PC-9 (cell line): ENCODE measurements at regions of chr10 and their contacts with region 1.

Region 1: DNA sequence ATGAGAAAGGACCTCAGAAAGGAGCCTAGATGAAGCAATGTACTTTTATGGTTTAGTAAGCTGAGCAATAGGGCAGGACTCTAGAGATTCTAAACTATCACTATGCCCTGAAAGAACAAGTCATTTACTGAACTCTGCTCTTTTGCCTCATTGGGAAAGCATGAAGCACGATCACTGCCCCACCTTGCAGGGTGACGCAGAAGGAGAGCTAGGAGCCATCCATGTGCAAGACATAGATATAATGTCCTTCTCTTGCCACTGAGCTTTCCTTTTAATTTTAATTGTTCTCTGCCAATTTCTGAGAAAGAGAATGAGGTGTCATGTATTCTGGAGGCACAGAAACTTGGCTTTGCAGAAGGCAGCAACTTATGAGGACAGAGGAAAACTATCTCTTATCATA is 108.3 kb downstream of the SORCS1 start:
- DNase-seq: no peak
- H3K4me3 ChIP-seq: no peak overlapping the region
- H3K27ac ChIP-seq: no peak overlapping the region
- H3K4me1 ChIP-seq: no peaks in the 10 kb centered on the region
- H3K27me3 ChIP-seq: no peaks in the 10 kb centered on the region
- CTCF ChIP-seq: no peak

Region 2: GRCh38 chr10:106967452-106967851 is 88.7 kb before region 1 on chr10:
- CTCF ChIA-PET with region 1: no interaction called
- POLR2A ChIA-PET with region 1: no interaction called
- intact Hi-C with region 1: no loop called
- DNase-seq: no peak
- H3K4me3 ChIP-seq: no peak overlapping the region
- H3K27ac ChIP-seq: no peak overlapping the region
- H3K4me1 ChIP-seq: no peaks in the 10 kb centered on the region
- H3K27me3 ChIP-seq: no peaks in the 10 kb centered on the region
- CTCF ChIP-seq: no peak

Region 3: GRCh38 chr10:107031931-107032699 is 24.1 kb before region 1 on chr10:
- CTCF ChIA-PET with region 1: no interaction called
- POLR2A ChIA-PET with region 1: no interaction called
- intact Hi-C with region 1: no loop called
- DNase-seq: no peak
- H3K4me3 ChIP-seq: no peak overlapping the region
- H3K27ac ChIP-seq: no peak overlapping the region
- H3K4me1 ChIP-seq: no peaks in the 10 kb centered on the region
- H3K27me3 ChIP-seq: no peaks in the 10 kb centered on the region
- CTCF ChIP-seq: no peak

Region 4: DNA sequence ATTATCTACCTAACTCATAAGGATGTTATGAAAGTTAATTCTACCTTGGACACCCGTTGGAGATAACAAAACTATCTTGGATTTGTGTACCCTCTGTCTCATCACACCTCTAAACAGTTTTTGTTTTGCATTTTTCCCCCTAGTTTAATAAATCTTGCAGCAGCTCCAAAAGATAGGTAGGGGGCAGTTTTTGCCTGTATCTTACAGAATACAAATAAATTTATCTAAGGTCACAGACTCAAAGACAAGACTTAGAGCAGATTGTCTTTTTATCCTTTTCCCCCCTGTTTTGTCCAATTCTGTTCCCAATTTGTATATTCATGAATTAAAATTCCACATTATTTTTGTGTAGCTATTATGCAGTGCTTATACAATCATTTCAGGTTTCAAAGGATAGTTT is 113.3 kb after region 1 on chr10:
- CTCF ChIA-PET with region 1: no interaction called
- POLR2A ChIA-PET with region 1: interaction called, 10 read pairs
- intact Hi-C with region 1: no loop called
- DNase-seq: no peak
- H3K4me3 ChIP-seq: no peak overlapping the region
- H3K27ac ChIP-seq: no peak overlapping the region
- H3K4me1 ChIP-seq: no peaks in the 10 kb centered on the region
- H3K27me3 ChIP-seq: no peaks in the 10 kb centered on the region
- CTCF ChIP-seq: no peak

Region 5: GRCh38 chr10:107873007-107873406 is 816.8 kb after region 1 on chr10:
- CTCF ChIA-PET with region 1: no interaction called
- POLR2A ChIA-PET with region 1: no interaction called
- intact Hi-C with region 1: no loop called
- DNase-seq: no peak
- H3K4me3 ChIP-seq: no peak overlapping the region
- H3K27ac ChIP-seq: no peak overlapping the region
- H3K4me1 ChIP-seq: no peaks in the 10 kb centered on the region
- H3K27me3 ChIP-seq: no peaks in the 10 kb centered on the region
- CTCF ChIP-seq: no peak

Region 6: DNA sequence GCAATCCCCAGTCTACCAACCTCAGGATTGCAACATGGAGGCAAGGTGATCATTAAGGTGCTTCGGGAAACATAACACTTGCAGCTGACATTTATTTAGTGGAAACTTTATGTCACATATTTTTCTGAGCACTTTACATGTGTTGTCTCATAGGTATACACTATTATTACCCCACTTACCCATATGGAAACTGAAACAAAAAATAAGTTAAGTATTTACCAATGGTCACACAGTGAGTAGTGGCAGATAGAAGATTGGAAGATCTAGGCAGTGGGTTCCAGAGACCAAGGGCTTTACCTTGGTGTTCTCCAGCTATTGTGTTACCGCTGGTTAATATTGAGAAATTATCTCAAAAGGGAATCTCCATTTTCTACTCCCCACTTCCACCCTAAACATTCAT is 1387.5 kb after region 1 on chr10:
- CTCF ChIA-PET with region 1: no interaction called
- POLR2A ChIA-PET with region 1: no interaction called
- intact Hi-C with region 1: no loop called
- DNase-seq: no peak
- H3K4me3 ChIP-seq: no peak overlapping the region
- H3K27ac ChIP-seq: no peak overlapping the region
- H3K4me1 ChIP-seq: no peaks in the 10 kb centered on the region
- H3K27me3 ChIP-seq: no peaks in the 10 kb centered on the region
- CTCF ChIP-seq: no peak